ENCODE measurements at regions of chr19 and their contacts with region 1.

Region 1: DNA sequence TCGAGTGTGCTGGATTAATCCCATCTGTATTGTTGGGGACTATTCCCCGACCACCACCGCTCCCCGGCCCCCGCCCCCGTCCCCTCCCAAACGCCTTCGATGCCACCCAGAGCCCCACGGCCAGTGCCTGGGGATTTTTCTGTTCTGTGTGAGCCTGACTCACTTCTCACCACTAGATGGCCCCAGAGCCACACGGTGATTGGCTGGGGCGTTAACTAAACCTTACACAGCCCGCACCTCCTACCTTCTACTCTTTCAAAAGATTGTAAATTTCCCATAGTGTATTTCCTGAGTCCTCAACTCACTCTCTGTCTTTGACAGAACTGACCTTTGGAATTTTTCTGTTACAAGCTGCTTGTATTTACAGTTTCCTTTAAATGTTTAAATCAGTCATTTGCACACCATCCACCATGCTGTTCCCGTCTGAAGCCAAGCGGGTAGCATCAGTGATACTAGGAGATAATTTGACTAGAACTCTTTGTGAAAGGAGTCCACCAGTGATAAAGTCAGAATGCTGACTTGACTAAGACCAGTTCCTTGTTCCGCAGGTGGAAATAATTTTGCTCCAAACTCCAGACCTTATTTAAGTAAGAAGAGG is 61.4 kb downstream of the RFX2 start:
- DNase-seq: peak; percentile 80 to 81 (median 81)
- ATAC-seq: peak; percentile 98
- H3K4me3 ChIP-seq: no peak overlapping the region
- H3K27ac ChIP-seq: no peak overlapping the region
- H3K4me1 ChIP-seq: peaks cover 4% of the 10 kb centered on the region
- H3K27me3 ChIP-seq: no peaks in the 10 kb centered on the region
- CTCF ChIP-seq: peak; percentile 77 to 94 (median 89)
- POLR2A ChIP-seq: no peak

Region 2: GRCh38 chr19:5631568-5632240 is 417.2 kb before region 1 on chr19:
- intact Hi-C with region 1: no loop called
- DNase-seq: no peak
- ATAC-seq: peak; percentile 30
- H3K4me3 ChIP-seq: no peak overlapping the region
- H3K27ac ChIP-seq: peak overlapping the region in 1 of 4 donors; percentile 25
- H3K4me1 ChIP-seq: peaks cover 47% of the 10 kb centered on the region
- H3K27me3 ChIP-seq: no peaks in the 10 kb centered on the region
- CTCF ChIP-seq: no peak
- POLR2A ChIP-seq: no peak

Region 3: GRCh38 chr19:6125571-6125989 is 76.7 kb after region 1 on chr19:
- intact Hi-C with region 1: loop called (anchors 5 kb)
- DNase-seq: peak; percentile 67 to 79 (median 72)
- ATAC-seq: peak; percentile 90
- H3K4me3 ChIP-seq: no peak overlapping the region
- H3K27ac ChIP-seq: no peak overlapping the region
- H3K4me1 ChIP-seq: no peaks in the 10 kb centered on the region
- H3K27me3 ChIP-seq: no peaks in the 10 kb centered on the region
- CTCF ChIP-seq: peak; percentile 49 to 88 (median 84)
- POLR2A ChIP-seq: no peak

Region 4: GRCh38 chr19:6199240-6199983 is 150.5 kb after region 1 on chr19:
- intact Hi-C with region 1: no loop called
- DNase-seq: peak; percentile 98 to 100 (median 100)
- ATAC-seq: peak; percentile 99
- H3K4me3 ChIP-seq: peak overlapping the region; percentile 69 to 88
- H3K27ac ChIP-seq: peak overlapping the region; percentile 36 to 86 (median 65)
- H3K4me1 ChIP-seq: peaks cover 24% of the 10 kb centered on the region
- H3K27me3 ChIP-seq: no peaks in the 10 kb centered on the region
- CTCF ChIP-seq: peak in 6 of 7 experiments; percentile 10 to 78 (median 62)
- POLR2A ChIP-seq: peak in 2 of 3 donors; percentile 56 to 61

Region 5: GRCh38 chr19:6312018-6312417 is 263.1 kb after region 1 on chr19:
- intact Hi-C with region 1: loop called (anchors 10 kb)
- DNase-seq: no peak
- ATAC-seq: no peak
- H3K4me3 ChIP-seq: no peak overlapping the region
- H3K27ac ChIP-seq: no peak overlapping the region
- H3K4me1 ChIP-seq: no peaks in the 10 kb centered on the region
- H3K27me3 ChIP-seq: no peaks in the 10 kb centered on the region
- CTCF ChIP-seq: no peak
- POLR2A ChIP-seq: no peak

Region 6: DNA sequence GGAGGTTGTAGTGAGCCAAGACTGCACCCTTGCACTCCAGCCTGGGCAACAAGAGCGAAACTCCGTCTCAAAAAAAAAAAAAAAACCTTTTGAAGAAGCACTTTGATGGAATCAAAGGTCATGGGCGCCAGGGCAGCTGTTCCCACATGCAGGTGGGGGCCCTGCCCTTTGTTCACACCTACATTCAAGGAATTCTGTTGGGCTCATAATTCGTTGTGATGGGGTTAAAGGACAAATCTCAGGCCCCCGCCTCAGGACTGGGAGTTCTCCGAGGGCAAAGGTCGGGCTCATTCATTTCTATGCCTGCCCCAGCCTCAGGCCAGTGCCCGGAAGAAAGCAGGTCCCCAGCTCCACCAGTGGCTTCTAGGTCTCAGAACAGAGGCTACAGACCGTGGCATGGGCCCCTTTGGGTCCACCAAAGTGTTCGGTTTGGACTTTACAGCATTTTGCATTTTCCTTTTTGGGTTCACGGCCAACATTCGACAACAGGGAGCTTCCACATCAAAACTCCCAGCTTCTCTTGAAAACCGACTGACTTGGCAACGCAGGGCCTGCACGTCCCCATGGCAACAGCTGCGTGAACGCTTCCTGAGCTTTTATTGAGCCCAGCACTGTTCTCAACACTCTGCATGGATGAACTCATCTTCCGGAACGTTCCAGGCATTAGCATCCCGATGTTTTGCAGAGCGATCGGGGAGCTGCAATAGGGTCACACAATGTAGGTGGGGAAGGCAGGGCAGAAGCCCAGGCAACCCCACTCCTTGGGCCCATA is 354.1 kb after region 1 on chr19:
- intact Hi-C with region 1: no loop called
- DNase-seq: peak in 2 of 4 donors; percentile 39 to 50
- ATAC-seq: no peak
- H3K4me3 ChIP-seq: no peak overlapping the region
- H3K27ac ChIP-seq: no peak overlapping the region
- H3K4me1 ChIP-seq: no peaks in the 10 kb centered on the region
- H3K27me3 ChIP-seq: no peaks in the 10 kb centered on the region
- CTCF ChIP-seq: no peak
- POLR2A ChIP-seq: no peak

Measured in body of pancreas (tissue), 4 donors.